ENCODE measurements at regions of chr6 and their contacts with region 1.

Region 1: GRCh38 chr6:28940858-28941680 is 17.3 kb upstream of the TRIM27 start:
- DNase-seq: peak; percentile 94
- H3K4me3 Mint-ChIP-seq: peak overlapping the region; percentile 92
- H3K27ac Mint-ChIP-seq: peak overlapping the region; percentile 96
- H3K4me1 Mint-ChIP-seq: peaks cover 49% of the 10 kb centered on the region
- H3K27me3 Mint-ChIP-seq: peaks cover 7% of the 10 kb centered on the region

Region 2: GRCh38 chr6:27177485-27178406 is 1763.3 kb before region 1 on chr6:
- intact Hi-C with region 1: loop called (anchors 5 kb)
- DNase-seq: peak; percentile 92
- H3K4me3 Mint-ChIP-seq: peak overlapping the region; percentile 95
- H3K27ac Mint-ChIP-seq: peak overlapping the region; percentile 93
- H3K4me1 Mint-ChIP-seq: peaks cover 17% of the 10 kb centered on the region
- H3K27me3 Mint-ChIP-seq: peaks cover 33% of the 10 kb centered on the region

Region 3: GRCh38 chr6:28657769-28658465 is 283.2 kb before region 1 on chr6:
- intact Hi-C with region 1: loop called (anchors 10 kb)
- DNase-seq: peak; percentile 81
- H3K4me3 Mint-ChIP-seq: peak overlapping the region; percentile 80
- H3K27ac Mint-ChIP-seq: peak overlapping the region; percentile 85
- H3K4me1 Mint-ChIP-seq: peaks cover 19% of the 10 kb centered on the region
- H3K27me3 Mint-ChIP-seq: peaks cover 62% of the 10 kb centered on the region

Region 4: DNA sequence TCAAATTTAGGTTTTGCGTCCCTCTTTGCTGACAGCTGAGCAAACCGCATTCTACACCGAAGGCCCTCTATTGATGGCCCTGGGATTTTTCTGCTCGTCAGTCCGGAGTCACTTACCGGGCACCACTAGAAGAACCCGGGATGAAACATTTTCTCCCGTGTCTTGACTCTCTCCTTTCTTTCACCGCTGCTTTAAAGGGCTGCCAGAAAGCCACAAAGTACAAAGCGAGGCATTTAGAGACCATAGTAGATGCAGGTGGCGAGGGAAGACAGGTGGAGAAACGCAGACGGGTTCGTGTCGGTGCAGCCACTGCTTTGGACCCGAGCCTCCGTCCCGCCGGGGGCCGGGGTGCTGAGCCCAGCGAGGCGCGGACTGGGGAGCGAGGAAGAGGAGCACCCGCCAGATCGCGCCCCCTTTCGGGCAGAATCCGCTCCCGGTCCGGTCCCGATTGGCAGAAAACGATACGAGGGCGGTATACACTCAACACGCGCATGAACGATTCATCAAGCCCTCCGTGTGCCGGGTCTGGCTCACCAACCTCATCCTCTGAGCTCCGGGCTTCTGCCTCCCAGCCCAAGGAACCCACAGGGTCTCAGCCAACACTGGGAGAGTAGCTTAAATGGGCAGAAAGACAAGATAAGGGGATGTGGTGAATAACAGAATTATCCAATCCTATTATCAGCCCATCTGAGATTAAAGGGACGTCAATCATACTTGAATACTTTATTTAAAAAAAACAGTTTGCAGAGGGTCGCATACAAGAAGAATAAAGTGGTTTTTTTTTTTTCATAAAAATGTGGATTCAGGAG is 102.2 kb before region 1 on chr6:
- intact Hi-C with region 1: loop called (anchors 1 kb)
- DNase-seq: peak; percentile 94
- H3K4me3 Mint-ChIP-seq: peak overlapping the region; percentile 98
- H3K27ac Mint-ChIP-seq: peak overlapping the region; percentile 81
- H3K4me1 Mint-ChIP-seq: peaks cover 16% of the 10 kb centered on the region
- H3K27me3 Mint-ChIP-seq: peaks cover 44% of the 10 kb centered on the region

Region 5: DNA sequence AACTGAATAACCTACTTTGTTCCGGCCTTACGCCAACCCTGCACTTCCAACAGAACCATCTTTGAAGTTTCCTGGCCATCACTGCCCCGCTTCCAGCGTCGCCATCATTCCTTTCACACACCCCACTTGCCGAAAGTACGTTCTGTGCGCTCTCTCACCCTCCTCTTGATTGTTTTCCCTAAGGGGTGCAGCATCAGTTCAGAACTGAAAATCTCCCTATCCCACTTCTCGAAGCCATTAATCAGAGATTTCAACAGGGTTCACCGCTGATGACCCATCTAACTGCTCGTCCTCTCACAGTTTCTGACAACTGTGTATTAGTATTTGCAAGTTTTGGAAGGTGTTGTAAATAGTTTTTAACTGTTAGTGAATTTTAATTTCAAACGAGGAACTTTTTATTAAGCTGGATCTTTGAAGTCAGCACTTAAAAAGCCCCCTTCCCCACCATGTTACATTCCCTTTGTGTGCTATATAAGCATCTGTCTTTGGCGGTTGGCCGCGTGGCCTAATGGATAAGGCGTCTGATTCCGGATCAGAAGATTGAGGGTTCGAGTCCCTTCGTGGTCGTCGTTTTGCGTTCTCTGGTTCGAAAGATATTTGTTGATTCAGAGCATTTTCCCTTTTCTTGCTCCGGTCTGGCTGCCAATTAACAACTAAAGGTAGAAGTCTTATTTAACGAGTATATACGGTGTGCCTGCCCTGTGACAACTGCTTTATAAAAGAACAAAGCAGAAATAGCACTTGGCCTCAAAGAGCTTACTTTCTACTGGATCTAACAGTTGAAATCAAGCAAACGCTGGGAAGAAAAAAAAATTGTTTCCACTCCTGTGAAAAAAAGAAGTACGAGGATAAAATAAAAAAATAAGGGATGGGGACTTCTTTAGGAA is 59.9 kb before region 1 on chr6:
- intact Hi-C with region 1: loop called (anchors 5 kb)
- DNase-seq: peak; percentile 85
- H3K4me3 Mint-ChIP-seq: peak overlapping the region; percentile 61
- H3K27ac Mint-ChIP-seq: peak overlapping the region; percentile 34
- H3K4me1 Mint-ChIP-seq: peaks cover 26% of the 10 kb centered on the region
- H3K27me3 Mint-ChIP-seq: peaks cover 29% of the 10 kb centered on the region

Region 6: DNA sequence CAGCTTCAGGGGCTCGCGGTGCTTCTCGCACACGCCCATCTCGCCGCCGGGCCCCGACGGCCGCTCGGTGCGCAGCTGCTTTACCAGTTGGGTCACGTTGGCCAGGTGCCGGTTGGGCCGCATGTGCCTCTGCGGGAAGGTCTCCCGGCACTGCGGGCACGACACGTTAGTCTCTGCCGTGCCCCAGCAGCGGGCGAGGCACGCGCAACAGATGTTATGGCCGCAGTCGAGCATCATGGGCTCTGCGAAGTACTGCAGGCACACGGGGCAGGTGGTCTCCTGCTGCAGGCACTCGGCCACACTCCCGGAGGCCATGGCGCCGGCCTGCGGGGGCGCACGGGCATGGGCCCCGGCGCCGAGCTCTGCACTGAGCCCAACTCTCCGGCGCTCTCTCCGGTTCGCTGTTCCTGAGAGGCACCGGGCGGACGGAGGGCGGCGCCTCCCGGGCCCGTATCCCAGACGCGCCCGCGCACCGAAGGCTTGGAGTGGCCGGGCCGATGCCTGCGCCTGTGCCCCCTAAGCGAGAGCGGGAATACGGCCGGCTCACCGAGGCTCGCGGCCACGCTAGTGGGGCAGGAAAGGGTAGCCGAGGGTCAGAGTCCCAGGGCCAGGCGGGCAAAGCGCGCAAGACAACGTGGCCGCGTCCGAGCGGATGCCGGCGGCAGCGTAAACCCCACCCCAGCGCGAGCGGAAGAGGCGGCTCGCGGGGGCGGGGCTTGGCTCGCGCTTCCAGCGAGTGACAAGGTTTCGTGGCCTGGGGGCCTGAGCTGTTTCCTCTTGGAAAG is 17.6 kb before region 1 on chr6 and contains the start of gene TRIM27:
- intact Hi-C with region 1: loop called (anchors 1 kb)
- DNase-seq: peak; percentile 96
- H3K4me3 Mint-ChIP-seq: peak within 1 kb of the TSS; percentile 85
- H3K27ac Mint-ChIP-seq: peak within 1 kb of the TSS; percentile 93
- H3K4me1 Mint-ChIP-seq: peaks cover 27% of the 10 kb centered on the region
- H3K27me3 Mint-ChIP-seq: no peaks in the 10 kb centered on the region
- total RNA-seq, gene TRIM27: 64.8 and 67.3 TPM in 2 replicates

Region 7: DNA sequence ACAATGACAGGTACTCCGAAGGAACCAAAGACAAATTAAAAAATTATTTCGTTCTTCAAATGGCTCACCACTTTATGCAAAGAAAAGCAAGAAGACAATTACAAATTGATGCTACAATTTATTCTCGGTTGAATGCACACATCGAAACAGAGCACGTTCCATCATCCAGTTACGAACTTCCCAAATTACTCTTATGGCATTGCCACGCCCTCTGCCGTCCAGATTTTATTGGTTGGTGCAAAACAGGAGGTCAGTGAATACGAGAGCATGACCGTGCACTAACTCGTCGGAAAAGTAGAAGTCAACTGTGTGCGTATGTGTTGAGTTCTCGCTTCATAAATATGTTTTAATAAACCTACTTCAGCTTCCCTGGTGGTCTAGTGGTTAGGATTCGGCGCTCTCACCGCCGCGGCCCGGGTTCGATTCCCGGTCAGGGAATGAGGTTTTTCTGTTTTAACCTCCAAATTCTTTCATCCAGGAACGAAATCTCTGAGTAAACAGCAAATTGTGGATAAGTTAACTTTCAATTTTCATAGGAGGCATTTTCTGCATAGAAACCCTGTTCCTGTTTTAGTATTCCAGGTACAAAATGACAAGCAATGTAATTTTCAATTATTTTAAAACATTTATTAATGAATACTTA is 40.9 kb after region 1 on chr6:
- intact Hi-C with region 1: loop called (anchors 1 kb)
- DNase-seq: peak; percentile 91
- H3K4me3 Mint-ChIP-seq: peak overlapping the region; percentile 92
- H3K27ac Mint-ChIP-seq: peak overlapping the region; percentile 95
- H3K4me1 Mint-ChIP-seq: peaks cover 56% of the 10 kb centered on the region
- H3K27me3 Mint-ChIP-seq: peaks cover 38% of the 10 kb centered on the region

Region 8: GRCh38 chr6:29005183-29005885 is 64.3 kb after region 1 on chr6 and contains the start of gene ZNF311:
- intact Hi-C with region 1: no loop called
- DNase-seq: peak; percentile 85
- H3K4me3 Mint-ChIP-seq: peak within 1 kb of the TSS; percentile 90
- H3K27ac Mint-ChIP-seq: peak within 1 kb of the TSS; percentile 87
- H3K4me1 Mint-ChIP-seq: peaks cover 20% of the 10 kb centered on the region
- H3K27me3 Mint-ChIP-seq: peaks cover 7% of the 10 kb centered on the region
- total RNA-seq, gene ZNF311: 0.86 and 0.97 TPM in 2 replicates

Region 9: GRCh38 chr6:29112119-29112518 is 171.1 kb after region 1 on chr6:
- intact Hi-C with region 1: no loop called
- DNase-seq: no peak
- H3K4me3 Mint-ChIP-seq: no peak overlapping the region
- H3K27ac Mint-ChIP-seq: no peak overlapping the region
- H3K4me1 Mint-ChIP-seq: no peaks in the 10 kb centered on the region
- H3K27me3 Mint-ChIP-seq: peaks cover 16% of the 10 kb centered on the region

Measured in activated CD4-positive, alpha-beta T cell treated with anti-CD3 and anti-CD28 coated beads, Interleukin-2, amount 10 ng/mL, durations not matched to agents 24 days and 14 days (primary cell).